Cardiac septum (tissue), 1 donor: ENCODE measurements at regions of chr7 and their contacts with region 1.

Region 1: GRCh38 chr7:148940702-148941597 is 56.9 kb upstream of the EZH2 start:
- DNase-seq: peak; percentile 88

Region 2: GRCh38 chr7:148884299-148885022 is 56.5 kb before region 1 on chr7:
- intact Hi-C with region 1: loop called (anchors 2 kb)
- DNase-seq: peak; percentile 95

Region 3: DNA sequence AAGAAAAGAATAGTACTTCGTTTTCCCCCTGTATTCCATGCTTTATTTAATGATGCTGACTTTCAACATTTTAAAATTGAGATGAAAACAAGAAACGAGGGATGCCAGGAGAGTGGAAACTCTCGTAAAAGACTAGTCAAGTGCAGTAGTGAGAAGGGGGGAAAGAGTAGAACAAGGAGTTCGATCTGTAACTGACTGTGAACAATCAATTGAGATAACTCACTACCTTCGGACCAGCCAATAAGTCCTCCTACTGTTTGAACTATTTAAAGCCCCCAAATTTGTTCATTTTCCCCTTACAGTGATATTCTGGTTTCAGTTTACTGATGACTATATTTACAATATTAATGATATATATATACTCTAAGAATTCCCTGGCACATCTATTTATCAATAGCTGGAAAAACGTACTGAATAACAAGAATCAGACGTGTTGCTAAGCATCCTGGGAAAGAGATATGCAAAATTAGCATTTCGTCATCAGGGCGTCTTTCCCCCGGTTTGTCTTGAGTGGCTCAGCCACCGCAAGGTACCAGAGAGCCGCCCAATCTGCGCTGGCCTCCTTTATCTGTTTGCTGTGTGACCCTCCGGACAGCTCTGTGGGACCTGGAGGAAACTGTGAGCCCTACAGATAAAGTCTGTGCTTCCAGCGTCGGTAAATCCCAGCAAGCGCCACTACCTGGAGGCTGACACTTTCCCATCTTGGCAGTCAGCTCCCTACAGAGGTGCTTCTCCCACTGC is 46.2 kb after region 1 on chr7:
- intact Hi-C with region 1: loop called (anchors 2 kb)
- DNase-seq: peak; percentile 88